ENCODE measurements at regions of chr12 and their contacts with region 1.

Region 1: GRCh38 chr12:110449799-110450497 is at the start of gene ARPC3:
- DNase-seq: peak; percentile 96
- H3K4me3 Mint-ChIP-seq: peak within 1 kb of the TSS; percentile 92
- H3K27ac Mint-ChIP-seq: peak within 1 kb of the TSS; percentile 96
- H3K4me1 Mint-ChIP-seq: peaks cover 8% of the 10 kb centered on the region
- H3K27me3 Mint-ChIP-seq: no peaks in the 10 kb centered on the region
- CTCF ChIP-seq: peak; percentile 79
- total RNA-seq, gene ARPC3: 321 and 344 TPM in 2 replicates

Region 2: DNA sequence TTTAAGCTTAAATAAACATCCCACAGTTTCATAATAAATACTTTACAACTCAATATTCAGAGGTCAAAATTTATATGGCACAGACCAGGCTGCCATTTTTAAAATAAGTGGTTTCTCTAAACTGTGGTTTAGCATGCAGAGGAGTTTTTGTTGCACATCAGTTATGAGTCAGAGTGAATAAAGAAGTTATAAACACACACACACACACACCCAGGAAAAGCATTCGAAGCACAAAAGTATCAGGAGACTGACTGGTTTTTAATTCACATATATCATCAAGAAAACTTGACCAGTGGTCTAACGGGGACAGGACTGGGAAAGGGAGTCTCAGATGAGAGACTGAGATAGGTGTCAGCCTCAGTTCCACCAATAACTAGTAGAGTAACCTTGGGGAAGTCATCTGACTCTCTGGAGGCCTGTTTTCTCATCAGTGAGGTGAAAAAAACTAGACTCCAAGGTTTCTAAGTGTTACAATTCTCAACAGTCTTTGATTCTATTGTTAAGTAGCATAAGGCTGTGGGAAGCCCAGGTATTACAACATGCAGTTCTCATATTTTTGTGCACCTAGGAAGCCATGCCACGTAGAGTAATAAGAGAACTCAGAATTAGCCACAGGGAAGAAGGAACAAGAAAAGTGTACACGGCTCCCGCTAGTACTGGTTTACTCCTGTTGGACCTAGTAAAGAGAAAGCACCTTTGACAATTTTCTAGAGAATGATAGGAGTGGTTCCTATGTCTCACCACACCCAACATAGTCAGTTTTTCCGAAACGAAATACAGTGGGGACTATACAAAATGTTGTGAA is 128.0 kb after region 1 on chr12:
- CTCF ChIA-PET with region 1: interaction called, 10 read pairs
- intact Hi-C with region 1: no loop called
- DNase-seq: peak; percentile 62
- H3K4me3 Mint-ChIP-seq: peak overlapping the region; percentile 50
- H3K27ac Mint-ChIP-seq: peak overlapping the region; percentile 94
- H3K4me1 Mint-ChIP-seq: peaks cover 44% of the 10 kb centered on the region
- H3K27me3 Mint-ChIP-seq: no peaks in the 10 kb centered on the region
- CTCF ChIP-seq: no peak